ENCODE measurements at regions of chr14 and their contacts with region 1.

Region 1: GRCh38 chr14:73568381-73568781 is 632 bp upstream of the ACOT2 start:
- DNase-seq: peak; percentile 69
- H3K4me3 Mint-ChIP-seq: peak overlapping the region; percentile 83
- H3K27ac Mint-ChIP-seq: peak overlapping the region; percentile 95
- H3K4me1 Mint-ChIP-seq: peaks cover 46% of the 10 kb centered on the region
- H3K27me3 Mint-ChIP-seq: no peaks in the 10 kb centered on the region

Region 2: GRCh38 chr14:73458151-73458976 is 110.0 kb before region 1 on chr14 and contains the start of gene NUMB:
- CTCF ChIA-PET with region 1: no interaction called
- intact Hi-C with region 1: loop called (anchors 1 kb)
- DNase-seq: peak; percentile 99
- H3K4me3 Mint-ChIP-seq: peak within 1 kb of the TSS; percentile 92
- H3K27ac Mint-ChIP-seq: peak within 1 kb of the TSS; percentile 79
- H3K4me1 Mint-ChIP-seq: peaks cover 42% of the 10 kb centered on the region
- H3K27me3 Mint-ChIP-seq: no peaks in the 10 kb centered on the region
- total RNA-seq, gene NUMB: 24.2 to 26.4 TPM

Region 3: GRCh38 chr14:73503648-73504047 is 64.7 kb before region 1 on chr14:
- CTCF ChIA-PET with region 1: interaction called, 33 read pairs
- intact Hi-C with region 1: loop called (anchors 1 kb)
- DNase-seq: no peak
- H3K4me3 Mint-ChIP-seq: no peak overlapping the region
- H3K27ac Mint-ChIP-seq: no peak overlapping the region
- H3K4me1 Mint-ChIP-seq: no peaks in the 10 kb centered on the region
- H3K27me3 Mint-ChIP-seq: no peaks in the 10 kb centered on the region

Region 4: GRCh38 chr14:73591690-73592448 is 23.5 kb after region 1 on chr14 and contains the start of gene ACOT4:
- CTCF ChIA-PET with region 1: interaction called, 18 read pairs
- intact Hi-C with region 1: loop called (anchors 1 kb)
- DNase-seq: peak; percentile 42
- H3K4me3 Mint-ChIP-seq: peak within 1 kb of the TSS; percentile 68
- H3K27ac Mint-ChIP-seq: no peak within 1 kb of the TSS
- H3K4me1 Mint-ChIP-seq: peaks cover 7% of the 10 kb centered on the region
- H3K27me3 Mint-ChIP-seq: no peaks in the 10 kb centered on the region
- total RNA-seq, gene ACOT4: 1.4 to 1.7 TPM

Region 5: GRCh38 chr14:73644531-73645247 is 76.3 kb after region 1 on chr14 and contains the start of gene DNAL1:
- CTCF ChIA-PET with region 1: no interaction called
- intact Hi-C with region 1: loop called (anchors 2 kb)
- DNase-seq: peak; percentile 93
- H3K4me3 Mint-ChIP-seq: peak within 1 kb of the TSS; percentile 92
- H3K27ac Mint-ChIP-seq: peak within 1 kb of the TSS; percentile 86
- H3K4me1 Mint-ChIP-seq: peaks cover 17% of the 10 kb centered on the region
- H3K27me3 Mint-ChIP-seq: no peaks in the 10 kb centered on the region
- total RNA-seq, gene DNAL1: 4.4 TPM

Region 6: DNA sequence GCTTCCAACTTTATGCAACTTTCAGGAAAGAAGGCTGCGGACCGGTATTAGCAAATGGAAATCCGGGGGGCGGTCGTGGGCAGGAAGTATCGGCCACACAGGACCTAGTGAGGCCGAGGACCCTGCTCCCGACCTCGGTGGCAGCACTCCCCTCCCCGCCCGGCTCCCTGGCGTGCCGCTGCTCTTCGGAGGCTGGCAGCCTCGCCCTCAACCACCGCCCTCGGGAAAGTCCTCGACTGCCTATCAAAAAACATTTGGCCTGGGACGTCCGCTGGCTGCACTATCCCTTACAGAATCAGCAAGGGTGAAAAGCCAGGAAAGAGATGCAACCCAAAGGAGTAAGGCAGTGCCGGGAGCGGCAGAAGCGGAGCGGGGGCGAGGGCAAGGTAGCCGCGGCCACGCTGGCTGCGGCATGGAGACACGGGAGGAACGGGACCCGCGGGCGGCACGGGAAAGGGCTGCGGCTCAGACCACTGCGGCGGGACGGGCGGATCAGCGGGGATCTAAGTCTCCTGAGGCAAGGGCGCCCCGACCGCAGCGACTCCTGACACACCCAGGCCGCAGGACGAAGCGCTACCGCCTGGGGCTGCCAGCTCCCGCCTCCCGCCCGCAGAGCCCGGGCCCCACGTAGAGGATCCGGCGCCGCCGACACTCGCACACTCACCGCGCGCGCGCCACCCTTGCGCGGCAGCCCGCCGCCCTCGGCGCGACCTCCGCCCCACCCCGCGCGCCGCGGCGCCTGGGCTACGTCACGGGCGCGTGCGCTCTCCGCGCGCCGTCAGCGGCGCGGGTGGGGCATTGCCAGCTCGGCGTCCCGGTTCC is 450.4 kb after region 1 on chr14 and contains the starts of genes BBOF1 and ENTPD5:
- CTCF ChIA-PET with region 1: no interaction called
- intact Hi-C with region 1: loop called (anchors 1 kb)
- DNase-seq: peak; percentile 80
- H3K4me3 Mint-ChIP-seq: peak within 1 kb of the TSS; percentile 86
- H3K27ac Mint-ChIP-seq: peak within 1 kb of the TSS; percentile 90
- H3K4me1 Mint-ChIP-seq: peaks cover 13% of the 10 kb centered on the region
- H3K27me3 Mint-ChIP-seq: no peaks in the 10 kb centered on the region
- total RNA-seq, gene BBOF1: 1.3 to 1.7 TPM
- total RNA-seq, gene ENTPD5: 7.3 to 9.6 TPM

Measured in activated naive CD4-positive, alpha-beta T cell treated with anti-CD3 and anti-CD28 coated beads for 36 hours (primary cell).